ENCODE measurements at regions of chr18 and their contacts with region 1.

Region 1: GRCh38 chr18:3665780-3666525 is 216.0 kb downstream of the TGIF1 start:
- DNase-seq: peak; percentile 94
- ATAC-seq: peak; percentile 94
- H3K4me3 ChIP-seq: peak overlapping the region; percentile 3; the same call in 1 of the 2 replicates
- H3K27ac ChIP-seq: peak overlapping the region; percentile 48
- H3K4me1 ChIP-seq: peaks cover 8% of the 10 kb centered on the region
- H3K27me3 ChIP-seq: no peaks in the 10 kb centered on the region
- CTCF ChIP-seq: peak; percentile 95

Region 2: GRCh38 chr18:3441290-3441689 is 224.7 kb before region 1 on chr18:
- CTCF ChIA-PET with region 1: no interaction called
- POLR2A ChIA-PET with region 1: no interaction called
- intact Hi-C with region 1: loop called (anchors 1 kb)
- DNase-seq: peak; percentile 62
- ATAC-seq: peak; percentile 99
- H3K4me3 ChIP-seq: no peak overlapping the region
- H3K27ac ChIP-seq: no peak overlapping the region
- H3K4me1 ChIP-seq: peaks cover 4% of the 10 kb centered on the region
- H3K27me3 ChIP-seq: no peaks in the 10 kb centered on the region
- CTCF ChIP-seq: peak; percentile 67

Region 3: GRCh38 chr18:3511922-3512372 is 154.0 kb before region 1 on chr18:
- CTCF ChIA-PET with region 1: no interaction called
- POLR2A ChIA-PET with region 1: no interaction called
- intact Hi-C with region 1: loop called (anchors 5 kb)
- DNase-seq: peak; percentile 82
- ATAC-seq: peak; percentile 70
- H3K4me3 ChIP-seq: no peak overlapping the region
- H3K27ac ChIP-seq: no peak overlapping the region
- H3K4me1 ChIP-seq: peaks cover 20% of the 10 kb centered on the region
- H3K27me3 ChIP-seq: no peaks in the 10 kb centered on the region
- CTCF ChIP-seq: no peak

Region 4: DNA sequence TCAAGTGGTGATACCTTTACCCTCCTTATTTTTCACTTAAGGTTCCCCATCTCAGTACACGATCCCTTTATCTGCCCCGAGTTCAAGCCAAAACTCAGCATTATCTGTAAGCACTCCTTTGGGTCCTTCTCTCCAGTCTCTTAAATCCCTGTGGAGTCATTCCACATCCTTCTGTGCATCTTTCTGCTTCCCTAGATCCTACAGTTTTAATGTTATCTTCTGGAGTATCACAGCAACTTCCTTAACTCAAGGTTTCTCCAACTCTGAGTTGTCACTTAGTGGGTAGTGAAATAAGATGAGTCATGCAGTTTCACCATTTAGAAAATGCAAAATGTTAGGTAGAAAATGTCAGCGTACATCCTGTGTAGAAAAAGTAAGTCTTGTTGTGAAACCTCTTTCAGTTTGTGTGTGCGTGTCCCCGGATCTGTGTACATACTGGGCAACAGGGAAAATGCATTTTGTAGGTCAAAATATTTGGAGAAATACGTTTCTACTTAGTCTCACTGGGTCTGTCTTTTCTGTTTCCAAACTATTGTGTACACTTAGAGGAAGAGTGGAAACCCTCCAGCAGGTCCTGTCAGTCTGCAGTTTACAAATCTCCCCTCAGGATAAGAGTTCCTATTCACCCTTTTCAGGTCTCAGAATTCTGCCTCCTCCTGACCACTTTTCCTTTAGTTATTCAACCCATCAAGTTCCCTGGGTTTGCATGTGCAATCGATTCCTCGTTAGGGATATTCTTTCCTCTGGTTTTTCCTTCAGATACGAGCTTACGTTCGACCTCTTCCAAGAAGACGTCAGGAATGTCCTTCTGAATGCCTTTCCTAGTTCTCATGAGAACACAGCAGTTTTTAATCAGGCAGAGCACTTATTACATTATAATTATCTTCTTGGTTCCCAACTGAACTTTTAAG is 61.2 kb before region 1 on chr18:
- CTCF ChIA-PET with region 1: interaction called, 19 read pairs
- POLR2A ChIA-PET with region 1: interaction called, 14 read pairs
- intact Hi-C with region 1: loop called (anchors 1 kb)
- DNase-seq: peak; percentile 94
- ATAC-seq: peak; percentile 38
- H3K4me3 ChIP-seq: peak overlapping the region; percentile 70
- H3K27ac ChIP-seq: peak overlapping the region; percentile 99
- H3K4me1 ChIP-seq: peaks cover 42% of the 10 kb centered on the region
- H3K27me3 ChIP-seq: no peaks in the 10 kb centered on the region
- CTCF ChIP-seq: no peak

Region 5: DNA sequence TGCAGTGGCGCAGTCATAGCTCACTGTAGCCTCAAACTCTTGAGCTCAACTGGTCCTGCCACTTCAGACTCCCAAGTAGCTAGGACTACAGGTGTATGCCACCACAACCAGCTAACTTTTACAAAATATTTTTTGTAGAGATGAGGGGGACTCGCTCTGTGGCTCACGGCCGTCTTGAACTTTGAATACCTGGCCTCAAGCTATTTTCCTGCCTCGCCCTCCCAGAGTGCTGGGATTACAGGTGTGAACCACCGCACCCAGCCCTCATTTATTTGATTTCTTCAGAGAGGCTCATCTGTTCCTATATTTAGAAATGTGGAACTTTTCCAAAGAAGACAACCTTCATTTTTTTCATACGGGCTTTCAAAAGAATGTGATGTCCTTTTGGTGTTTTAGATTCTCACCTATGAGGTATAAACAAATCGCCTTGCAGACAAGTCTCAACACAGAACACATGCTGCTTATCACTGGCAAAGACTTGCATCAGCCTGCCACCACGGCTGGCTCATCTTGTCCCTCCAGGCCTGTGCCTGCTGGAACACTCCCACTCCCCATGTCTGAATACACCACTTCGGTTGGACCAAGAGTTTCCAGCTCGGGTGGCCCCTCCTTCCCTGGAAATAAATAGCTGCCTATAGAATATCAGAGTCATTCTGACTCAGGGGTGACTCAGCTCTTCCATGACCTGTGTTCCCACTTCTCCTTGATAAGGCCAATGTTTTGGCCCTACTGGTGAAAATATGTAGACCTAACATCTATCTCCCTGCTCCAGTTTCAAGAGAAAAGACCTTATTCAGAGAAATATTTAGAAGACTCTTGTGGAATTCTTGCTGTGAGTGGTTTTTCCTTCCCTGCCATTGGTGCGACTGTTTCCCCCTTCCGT is 13.3 kb before region 1 on chr18:
- CTCF ChIA-PET with region 1: interaction called, 6 read pairs
- POLR2A ChIA-PET with region 1: interaction called, 27 read pairs
- intact Hi-C with region 1: no loop called
- DNase-seq: peak; percentile 99
- ATAC-seq: peak; percentile 97
- H3K4me3 ChIP-seq: no peak overlapping the region
- H3K27ac ChIP-seq: peak overlapping the region; percentile 86
- H3K4me1 ChIP-seq: peaks cover 42% of the 10 kb centered on the region
- H3K27me3 ChIP-seq: no peaks in the 10 kb centered on the region
- CTCF ChIP-seq: 0 out of 2 replicates have a peak, but pooled peaks have one; percentile 12